HEK293 (cell line): ENCODE measurements at regions of chr10 and their contacts with region 1.

Region 1: GRCh38 chr10:130079614-130080460 is 30.8 kb downstream of the C10orf143 start:
- H3K4me3 ChIP-seq: no peak overlapping the region
- H3K27ac ChIP-seq: peak overlapping the region; percentile 71
- H3K4me1 ChIP-seq: peaks cover 23% of the 10 kb centered on the region; the same call in 1 of the 2 replicates
- CTCF ChIP-seq: no peak

Region 2: DNA sequence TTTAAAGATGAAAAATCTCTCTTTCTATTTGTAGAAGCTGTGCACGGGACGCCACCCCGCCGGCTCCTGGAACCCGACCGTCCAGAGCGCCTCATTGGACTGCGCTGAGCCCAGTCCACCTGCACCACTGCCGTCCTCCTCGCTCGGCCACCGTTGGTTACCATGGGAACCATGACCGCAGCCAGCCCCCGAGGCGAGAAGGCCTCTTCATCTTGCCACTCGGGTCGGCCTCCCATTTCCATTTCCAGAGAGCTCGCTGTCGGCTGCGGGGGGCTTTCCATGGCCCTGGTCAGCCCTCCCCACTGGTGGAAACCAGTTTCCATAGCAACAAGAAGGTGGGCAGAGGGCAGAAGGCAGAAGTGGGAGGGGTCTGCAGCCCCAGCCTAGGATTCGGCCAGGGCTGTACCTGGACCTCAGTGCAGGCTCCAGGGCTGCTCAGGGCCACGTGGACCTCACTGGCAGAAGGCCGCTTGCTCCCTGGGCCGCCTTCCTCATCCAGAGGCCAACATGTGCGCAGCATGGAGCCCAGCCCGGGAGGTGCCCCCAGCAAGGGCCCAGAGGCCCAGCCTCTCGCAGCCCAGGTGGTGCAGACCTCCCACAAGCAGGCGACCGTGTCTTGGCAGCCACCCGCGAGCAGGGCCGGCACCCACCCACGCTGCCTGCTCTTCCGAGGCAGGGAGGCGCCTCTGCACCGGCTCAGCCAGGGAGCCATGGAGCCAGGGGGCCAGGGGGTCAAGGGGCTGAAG is 1537.4 kb after region 1 on chr10:
- CTCF ChIA-PET with region 1: interaction called, 10 read pairs
- POLR2A ChIA-PET with region 1: no interaction called
- H3K4me3 ChIP-seq: no peak overlapping the region
- H3K27ac ChIP-seq: no peak overlapping the region
- H3K4me1 ChIP-seq: no peaks in the 10 kb centered on the region
- CTCF ChIP-seq: no peak